Calu3 (cell line): ENCODE measurements at regions of chr11 and their contacts with region 1.

Region 1: GRCh38 chr11:64705501-64705900 is 17.5 kb downstream of the NRXN2 start:
- DNase-seq: no peak
- H3K4me3 Mint-ChIP-seq: no peak overlapping the region
- H3K27ac Mint-ChIP-seq: no peak overlapping the region
- H3K4me1 Mint-ChIP-seq: peaks cover 6% of the 10 kb centered on the region
- H3K27me3 Mint-ChIP-seq: peaks cover 86% of the 10 kb centered on the region
- CTCF ChIP-seq: no peak

Region 2: DNA sequence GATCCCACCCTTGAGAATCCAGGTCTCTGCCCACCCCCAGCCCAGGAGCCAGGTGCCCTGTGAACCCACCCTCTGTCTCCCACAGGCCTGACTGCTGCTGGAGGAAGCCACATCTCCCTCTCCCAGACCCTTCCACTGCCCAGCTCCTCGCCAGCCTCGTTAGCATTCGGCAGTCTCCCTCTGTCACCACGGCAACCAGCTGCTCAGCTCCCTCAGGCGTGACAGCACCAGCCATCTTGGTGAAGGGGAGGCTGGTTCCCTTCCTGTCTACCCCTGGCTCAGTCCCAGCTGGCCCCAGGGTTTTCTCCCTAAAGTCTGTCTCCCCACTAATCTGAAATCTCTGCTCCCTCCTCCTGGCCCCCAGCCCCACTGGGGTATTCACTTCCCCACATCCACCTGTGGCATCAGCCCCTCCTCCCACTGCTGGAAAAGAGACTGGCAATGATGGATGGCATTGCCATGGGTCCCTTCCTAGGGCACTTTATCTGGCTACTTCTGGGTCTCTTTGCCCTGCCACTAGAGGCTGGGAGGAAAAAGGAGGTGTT is 10.6 kb before region 1 on chr11:
- CTCF ChIA-PET with region 1: interaction called, 10 read pairs
- intact Hi-C with region 1: no loop called
- DNase-seq: no peak
- H3K4me3 Mint-ChIP-seq: no peak overlapping the region
- H3K27ac Mint-ChIP-seq: no peak overlapping the region
- H3K4me1 Mint-ChIP-seq: no peaks in the 10 kb centered on the region
- H3K27me3 Mint-ChIP-seq: peaks cover 100% of the 10 kb centered on the region
- CTCF ChIP-seq: no peak